Esophagus muscularis mucosa (tissue), 4 donors: ENCODE measurements at regions of chr4 and their contacts with region 1.

Region 1: DNA sequence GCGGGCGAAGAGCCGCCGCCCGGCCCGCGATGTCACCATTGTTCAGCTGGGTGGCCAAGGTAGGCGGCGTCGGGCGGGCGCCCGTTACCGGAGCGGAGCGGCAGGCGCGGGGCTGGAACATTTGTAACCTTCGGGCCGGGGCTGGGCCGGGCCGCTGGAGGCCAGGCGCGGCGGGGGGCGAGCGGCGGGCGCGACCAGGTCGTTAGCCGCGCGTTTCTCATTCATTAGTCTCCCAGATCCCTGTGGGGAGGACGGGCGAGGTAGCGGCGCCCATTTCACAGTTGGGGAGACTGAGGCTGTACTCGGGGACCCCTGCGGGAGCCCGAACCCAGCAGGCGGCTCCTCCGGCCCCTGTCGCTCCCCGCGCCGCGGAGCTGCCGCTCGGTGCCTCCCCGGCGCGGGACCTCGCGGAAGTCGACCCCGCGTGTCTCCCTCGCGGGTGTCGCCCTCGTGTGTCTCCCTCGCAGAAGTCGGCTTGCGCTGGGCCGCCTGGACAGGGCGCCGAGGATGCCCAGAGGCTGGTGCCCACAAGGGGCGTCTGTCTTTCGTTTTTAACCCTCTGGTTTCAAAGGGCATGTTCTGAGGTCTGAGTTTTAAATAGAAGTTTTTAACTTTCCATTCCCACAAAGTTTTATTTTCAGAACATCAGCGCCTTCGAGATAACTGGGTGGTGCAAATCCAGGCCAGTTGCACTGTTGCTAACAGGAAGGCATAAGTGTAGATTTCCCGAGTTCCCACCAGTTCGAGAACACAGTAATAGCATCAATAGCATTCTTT is 17.5 kb downstream of the PTTG2 start:
- DNase-seq: no peak
- H3K4me3 ChIP-seq: peak overlapping the region; percentile 77 to 97 (median 96)
- H3K27ac ChIP-seq: peak overlapping the region; percentile 97 to 99 (median 98)
- H3K4me1 ChIP-seq: peaks cover 44 to 59% (median 55%) of the 10 kb centered on the region in 4 donors
- H3K27me3 ChIP-seq: no peaks in the 10 kb centered on the region
- CTCF ChIP-seq: peak; percentile 65 to 81 (median 77)
- EP300 ChIP-seq: no peak
- POLR2A ChIP-seq: no peak

Region 2: DNA sequence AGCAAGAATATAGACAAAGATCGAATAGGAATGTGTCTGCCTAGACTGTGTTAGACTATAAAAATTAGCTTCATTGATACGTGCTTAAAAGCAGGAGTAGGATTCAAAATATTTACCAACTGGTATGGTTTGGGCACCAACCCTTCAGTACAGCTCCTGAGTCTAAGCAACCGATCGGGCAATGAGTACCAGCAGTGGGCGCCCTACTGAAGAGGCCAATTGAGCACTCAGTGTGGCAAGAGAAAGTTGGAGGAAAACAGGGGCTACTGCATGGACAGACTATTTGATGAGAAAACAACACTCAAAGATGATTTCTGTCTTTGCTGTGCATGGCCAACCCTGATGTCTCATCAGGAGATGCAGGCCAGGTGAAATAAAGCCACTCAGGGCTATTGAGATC is 909.1 kb before region 1 on chr4:
- intact Hi-C with region 1: no loop called
- DNase-seq: no peak
- H3K4me3 ChIP-seq: no peak overlapping the region
- H3K27ac ChIP-seq: no peak overlapping the region
- H3K4me1 ChIP-seq: no peaks in the 10 kb centered on the region
- H3K27me3 ChIP-seq: no peaks in the 10 kb centered on the region
- CTCF ChIP-seq: no peak
- EP300 ChIP-seq: no peak
- POLR2A ChIP-seq: no peak

Region 3: GRCh38 chr4:37686373-37687193 is 291.1 kb before region 1 on chr4 and contains the start of gene RELL1:
- intact Hi-C with region 1: loop called (anchors 10 kb)
- DNase-seq: peak; percentile 100
- H3K4me3 ChIP-seq: peak within 1 kb of the TSS; percentile 85 to 99 (median 96)
- H3K27ac ChIP-seq: peak within 1 kb of the TSS; percentile 96 to 99 (median 99)
- H3K4me1 ChIP-seq: peaks cover 18 to 47% (median 39%) of the 10 kb centered on the region in 4 donors
- H3K27me3 ChIP-seq: no peaks in the 10 kb centered on the region
- CTCF ChIP-seq: no peak
- EP300 ChIP-seq: no peak
- POLR2A ChIP-seq: no peak
- total RNA-seq, gene RELL1: 44.4 to 83.3 (median 73.6) TPM

Region 4: DNA sequence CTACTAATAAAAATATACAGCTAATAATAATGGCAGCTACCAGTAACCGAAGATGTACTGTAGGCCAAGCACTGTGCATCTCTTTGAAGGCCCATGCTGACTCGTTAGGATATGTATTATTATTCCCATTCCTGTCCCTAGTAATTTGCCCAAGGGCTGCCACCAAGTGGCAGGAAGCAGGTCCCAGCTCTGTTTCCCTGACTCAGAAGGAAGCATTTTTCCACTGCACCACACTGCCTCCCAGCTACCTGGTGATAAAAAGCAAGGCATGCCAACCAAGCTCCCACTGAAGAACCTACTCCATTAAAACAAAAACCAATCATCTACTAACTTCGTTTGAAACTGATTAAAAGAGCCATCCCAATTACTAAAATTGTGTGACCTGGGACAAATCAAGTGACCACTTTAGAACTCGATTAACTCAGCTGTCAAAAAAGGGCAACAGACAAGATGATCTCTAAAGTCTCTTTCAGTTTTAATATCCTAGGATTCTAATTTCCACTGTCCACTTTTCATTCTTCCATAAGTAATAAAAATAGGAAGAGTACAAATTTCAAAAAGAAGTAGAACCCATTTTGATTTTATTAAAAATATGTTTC is 175.5 kb before region 1 on chr4:
- intact Hi-C with region 1: loop called (anchors 5 kb)
- DNase-seq: no peak
- H3K4me3 ChIP-seq: no peak overlapping the region
- H3K27ac ChIP-seq: no peak overlapping the region
- H3K4me1 ChIP-seq: no peaks in the 10 kb centered on the region
- H3K27me3 ChIP-seq: no peaks in the 10 kb centered on the region
- CTCF ChIP-seq: peak; percentile 57 to 77 (median 59)
- EP300 ChIP-seq: no peak
- POLR2A ChIP-seq: no peak

Region 5: DNA sequence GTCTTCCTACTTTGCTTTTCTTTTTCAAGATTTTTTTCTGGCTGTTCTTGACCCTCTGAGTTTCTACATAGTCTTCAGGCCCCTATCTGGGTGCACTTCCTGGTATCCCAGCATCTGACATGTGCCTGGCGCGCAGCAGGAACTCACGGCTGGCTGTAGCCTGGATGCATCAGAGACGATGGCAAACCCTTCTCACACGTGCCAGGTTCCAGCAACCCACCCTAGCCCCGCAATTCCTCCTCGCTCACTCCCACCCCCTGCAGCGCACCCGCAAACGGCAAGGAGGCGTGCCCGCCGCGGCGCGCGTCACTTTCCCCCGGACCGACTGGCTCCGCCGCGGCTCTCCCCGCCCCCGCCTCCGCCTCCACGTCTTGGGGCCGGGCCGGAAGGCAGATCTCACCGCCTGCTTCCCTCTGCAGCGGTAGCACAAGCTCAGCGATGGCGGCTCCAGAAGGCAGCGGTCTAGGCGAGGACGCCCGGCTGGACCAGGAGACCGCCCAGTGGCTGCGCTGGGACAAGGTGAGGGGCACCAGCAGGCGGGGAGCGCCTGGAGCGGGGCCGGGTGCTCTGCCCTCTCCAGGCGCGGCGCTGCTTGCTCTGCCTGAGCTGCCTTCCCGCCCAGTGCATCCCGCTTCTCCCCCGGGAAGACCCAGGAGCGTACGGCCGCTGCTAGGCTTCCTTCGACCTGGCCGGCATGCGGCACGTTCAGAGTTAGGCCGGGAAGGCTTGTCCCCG is 151.2 kb before region 1 on chr4 and contains the start of gene PGM2:
- intact Hi-C with region 1: loop called (anchors 5 kb)
- DNase-seq: peak; percentile 95
- H3K4me3 ChIP-seq: peak within 1 kb of the TSS; percentile 68 to 90 (median 87)
- H3K27ac ChIP-seq: peak within 1 kb of the TSS; percentile 83 to 92 (median 90)
- H3K4me1 ChIP-seq: peaks cover 18 to 37% (median 27%) of the 10 kb centered on the region in 4 donors
- H3K27me3 ChIP-seq: no peaks in the 10 kb centered on the region
- CTCF ChIP-seq: peak in 2 of 3 experiments; percentile 7 to 16
- EP300 ChIP-seq: no peak
- POLR2A ChIP-seq: peak; percentile 19
- total RNA-seq, gene PGM2: 17.4 to 19.2 (median 18.8) TPM

Region 6: GRCh38 chr4:37891260-37892159 is 86.1 kb before region 1 on chr4:
- intact Hi-C with region 1: loop called (anchors 5 kb)
- DNase-seq: no peak
- H3K4me3 ChIP-seq: peak overlapping the region; percentile 95 to 99 (median 96)
- H3K27ac ChIP-seq: peak overlapping the region; percentile 94 to 98 (median 97)
- H3K4me1 ChIP-seq: peaks cover 18 to 71% (median 55%) of the 10 kb centered on the region in 4 donors
- H3K27me3 ChIP-seq: no peaks in the 10 kb centered on the region
- CTCF ChIP-seq: peak in 1 of 3 experiments; percentile 32
- EP300 ChIP-seq: no peak
- POLR2A ChIP-seq: no peak

Region 7: DNA sequence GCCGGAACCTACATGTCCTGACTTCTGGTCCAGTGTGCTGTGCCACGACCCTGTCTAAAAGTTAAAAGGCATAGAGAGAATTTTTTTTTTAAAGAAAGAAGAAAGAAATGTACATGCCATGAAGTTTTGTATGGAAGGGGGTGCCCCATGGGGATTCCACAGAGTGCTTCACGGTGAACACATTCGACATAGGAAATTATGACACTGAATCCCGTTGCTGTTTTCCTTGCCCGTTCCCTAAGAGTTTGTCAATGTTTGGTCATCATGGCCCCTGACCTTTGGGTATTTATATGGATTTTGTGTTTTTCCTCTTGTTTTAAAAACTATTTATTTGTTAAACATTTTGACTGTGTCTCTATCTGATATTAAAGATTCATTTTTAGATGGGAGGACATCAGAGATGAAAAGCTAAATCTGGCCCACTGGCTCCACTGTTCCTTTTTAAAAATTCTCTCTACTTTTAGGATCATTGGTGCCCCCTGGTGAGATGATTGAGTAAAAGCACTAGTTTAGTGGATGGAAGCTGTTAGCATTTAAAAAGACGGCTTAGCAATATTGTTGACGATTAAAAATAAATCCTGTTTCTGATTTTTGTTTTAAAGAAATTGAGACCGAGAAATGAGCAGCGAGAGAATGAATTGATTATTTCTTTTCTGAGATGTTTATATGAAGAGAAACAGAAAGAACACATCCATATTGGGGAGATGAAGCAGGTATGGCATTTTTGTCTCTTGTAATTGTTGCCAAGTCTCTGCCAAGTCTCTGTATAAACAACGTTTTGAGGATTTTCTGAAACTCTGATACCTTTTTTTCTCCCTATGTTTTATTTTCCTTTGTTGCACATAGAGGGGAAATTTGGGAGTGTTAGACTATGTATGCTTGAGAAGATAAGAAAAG is 57.6 kb after region 1 on chr4:
- intact Hi-C with region 1: loop called (anchors 5 kb)
- DNase-seq: no peak
- H3K4me3 ChIP-seq: no peak overlapping the region
- H3K27ac ChIP-seq: peak overlapping the region in 3 of 4 donors; percentile 11 to 53 (median 35)
- H3K4me1 ChIP-seq: peaks cover 6 to 14% (median 12%) of the 10 kb centered on the region in 4 donors
- H3K27me3 ChIP-seq: no peaks in the 10 kb centered on the region
- CTCF ChIP-seq: peak; percentile 69 to 78 (median 70)
- EP300 ChIP-seq: no peak
- POLR2A ChIP-seq: no peak

Region 8: DNA sequence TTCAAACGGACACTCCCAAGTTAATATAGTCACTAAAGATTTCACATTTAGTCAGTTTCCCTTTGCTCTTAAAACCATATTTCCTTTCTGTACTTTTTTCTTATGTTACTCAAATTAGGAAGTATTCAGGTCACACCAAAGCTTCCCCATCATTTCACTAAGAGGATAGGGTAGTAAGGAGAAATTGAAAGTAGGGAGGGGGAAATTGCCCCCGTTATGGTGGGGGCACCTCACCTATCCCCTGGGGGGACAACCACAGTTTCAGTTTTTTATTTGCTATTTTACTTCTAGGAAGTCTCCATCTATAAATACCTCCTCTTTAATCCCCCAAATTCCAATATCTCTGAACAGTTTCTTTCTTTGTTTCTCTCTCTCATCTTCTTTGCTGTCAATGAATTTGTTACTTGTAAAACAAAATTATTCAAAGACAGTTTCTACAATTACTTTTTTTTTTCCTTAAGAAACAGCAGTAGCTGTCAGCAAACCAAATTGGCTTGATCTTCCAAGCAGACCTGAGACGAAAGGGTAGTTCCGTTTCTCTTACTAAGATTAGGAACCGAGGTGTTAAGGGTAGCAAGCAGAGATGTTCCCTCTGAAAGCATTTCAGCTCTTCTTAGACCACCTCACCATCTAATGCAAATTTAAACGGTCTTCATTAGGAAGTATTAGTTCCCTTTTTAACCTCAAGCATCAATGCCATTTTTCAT is 526.2 kb after region 1 on chr4:
- intact Hi-C with region 1: no loop called
- DNase-seq: no peak
- H3K4me3 ChIP-seq: no peak overlapping the region
- H3K27ac ChIP-seq: no peak overlapping the region
- H3K4me1 ChIP-seq: no peaks in the 10 kb centered on the region
- H3K27me3 ChIP-seq: no peaks in the 10 kb centered on the region
- CTCF ChIP-seq: no peak
- EP300 ChIP-seq: no peak
- POLR2A ChIP-seq: no peak

Region 9: GRCh38 chr4:38625508-38625907 is 647.8 kb after region 1 on chr4:
- intact Hi-C with region 1: no loop called
- DNase-seq: no peak
- H3K4me3 ChIP-seq: no peak overlapping the region
- H3K27ac ChIP-seq: peak overlapping the region in 3 of 4 donors; percentile 9 to 56 (median 22)
- H3K4me1 ChIP-seq: peaks cover 0 to 32% (median 19%) of the 10 kb centered on the region in 4 donors
- H3K27me3 ChIP-seq: no peaks in the 10 kb centered on the region
- CTCF ChIP-seq: no peak
- EP300 ChIP-seq: no peak
- POLR2A ChIP-seq: no peak